Astrocyte of the cerebellum (primary cell): ENCODE measurements at regions of chr20 and their contacts with region 1.

Region 1: GRCh38 chr20:17504898-17505635 is 26.1 kb downstream of the BFSP1 start:
- DNase-seq: peak; percentile 16
- H3K4me3 ChIP-seq: peak overlapping the region; percentile 45
- CTCF ChIP-seq: peak; percentile 39

Region 2: GRCh38 chr20:18284805-18285533 is 779.9 kb after region 1 on chr20:
- in situ Hi-C with region 1: loop called (anchors 5 kb)
- DNase-seq: no peak
- H3K4me3 ChIP-seq: no peak overlapping the region
- CTCF ChIP-seq: no peak